A549 (cell line): ENCODE measurements at regions of chr7 and their contacts with region 1.

Region 1: DNA sequence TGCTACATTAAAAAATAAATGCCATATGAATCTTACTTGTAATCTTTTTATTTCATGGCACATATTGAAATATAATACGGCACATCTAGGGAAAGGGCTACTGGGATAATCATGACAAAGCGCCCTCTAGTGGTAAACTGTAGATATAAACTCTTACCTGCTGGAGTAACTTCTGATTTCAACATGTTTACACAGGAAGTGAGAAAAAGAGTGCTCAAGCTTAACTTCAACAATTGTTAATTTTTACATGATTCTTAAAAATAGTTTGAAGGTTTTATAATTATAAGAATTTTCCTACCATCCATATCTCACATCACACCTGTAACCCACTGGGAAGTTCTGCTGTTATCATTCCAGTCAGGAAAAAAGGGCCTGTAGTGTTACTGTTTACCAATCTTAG is 2.0 kb upstream of the HEPACAM2 start:
- DNase-seq: peak; percentile 38 to 65
- ATAC-seq: no peak
- H3K4me3 ChIP-seq: no peak overlapping the region
- H3K27ac ChIP-seq: no peak overlapping the region
- H3K4me1 ChIP-seq: peaks cover 11% of the 10 kb centered on the region; the same call in 2 of the 3 replicates
- CTCF ChIP-seq: peak; percentile 86
- EP300 ChIP-seq: no peak
- POLR2A ChIP-seq: no peak
- RAD21 ChIP-seq: peak; percentile 53 to 63

Region 2: GRCh38 chr7:93092757-93093370 is 135.4 kb before region 1 on chr7:
- CTCF ChIA-PET with region 1: interaction called, 22 read pairs
- POLR2A ChIA-PET with region 1: no interaction called
- DNase-seq: peak in 1 of 2 experiments; percentile 49
- ATAC-seq: peak in 1 of 2 experiments; percentile 85; a peak in 3 of 6 replicates
- H3K4me3 ChIP-seq: no peak overlapping the region
- H3K27ac ChIP-seq: no peak overlapping the region
- H3K4me1 ChIP-seq: no peaks in the 10 kb centered on the region
- CTCF ChIP-seq: peak; percentile 37
- EP300 ChIP-seq: no peak
- POLR2A ChIP-seq: no peak
- RAD21 ChIP-seq: peak; percentile 53 to 72

Region 3: DNA sequence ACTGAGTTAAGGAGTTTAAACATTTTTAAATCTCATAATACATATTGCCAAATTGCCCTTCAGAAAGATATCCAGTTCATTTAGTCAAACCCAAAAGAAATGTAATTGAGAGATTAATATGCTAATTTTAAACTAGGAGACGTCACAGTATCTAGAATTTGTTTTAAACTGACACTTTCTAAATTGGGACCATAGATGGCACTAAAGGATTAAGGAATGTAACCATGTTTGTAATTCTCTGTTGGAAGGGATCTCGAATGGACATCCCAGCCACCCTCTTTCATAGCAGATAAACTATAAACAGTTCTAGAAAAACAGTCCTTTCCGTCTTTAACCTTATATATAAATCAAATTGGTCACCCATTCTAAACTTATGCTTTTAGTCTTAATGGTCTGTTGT is 50.1 kb before region 1 on chr7:
- CTCF ChIA-PET with region 1: interaction called, 19 read pairs
- POLR2A ChIA-PET with region 1: no interaction called
- DNase-seq: peak; percentile 3 to 5
- ATAC-seq: no peak
- H3K4me3 ChIP-seq: no peak overlapping the region
- H3K27ac ChIP-seq: no peak overlapping the region
- H3K4me1 ChIP-seq: no peaks in the 10 kb centered on the region
- CTCF ChIP-seq: peak; percentile 34; the same call in 2 of the 3 replicates
- EP300 ChIP-seq: no peak
- POLR2A ChIP-seq: no peak
- RAD21 ChIP-seq: peak; percentile 40 to 44; a peak in 4 of 5 replicates

Region 4: DNA sequence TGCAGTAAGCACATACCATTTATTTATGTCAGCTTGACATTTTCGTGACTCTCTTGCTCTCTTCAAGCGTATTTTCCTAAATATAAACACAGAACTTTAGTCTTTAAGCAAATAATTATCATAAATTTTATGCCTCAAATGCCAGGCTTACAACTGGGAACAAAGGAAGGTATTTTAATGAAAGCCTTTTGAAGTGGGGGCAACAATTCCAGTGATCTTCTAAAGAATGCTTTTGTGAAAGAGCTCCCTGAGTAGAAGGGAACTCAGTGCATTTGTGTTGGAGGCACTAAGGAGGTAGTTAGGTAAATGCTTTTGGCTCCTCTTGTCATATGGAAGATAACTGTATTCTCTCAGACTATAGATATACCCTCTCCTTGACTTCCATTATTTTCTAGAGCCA is 108.8 kb after region 1 on chr7:
- CTCF ChIA-PET with region 1: no interaction called
- POLR2A ChIA-PET with region 1: no interaction called
- DNase-seq: no peak
- ATAC-seq: no peak
- H3K4me3 ChIP-seq: no peak overlapping the region
- H3K27ac ChIP-seq: no peak overlapping the region
- H3K4me1 ChIP-seq: no peaks in the 10 kb centered on the region
- CTCF ChIP-seq: no peak
- EP300 ChIP-seq: no peak
- POLR2A ChIP-seq: no peak
- RAD21 ChIP-seq: no peak